Psoas muscle (tissue), 8 donors: ENCODE measurements at regions of chr1 and their contacts with region 1.

Region 1: GRCh38 chr1:52552505-52553361 is at the start of gene TUT4:
- DNase-seq: peak; percentile 79 to 88
- ATAC-seq: peak; percentile 83 to 85 (median 84)
- H3K4me3 ChIP-seq: peak within 1 kb of the TSS; percentile 91
- H3K27ac ChIP-seq: peak within 1 kb of the TSS; percentile 92
- H3K4me1 ChIP-seq: peaks cover 42% of the 10 kb centered on the region
- H3K27me3 ChIP-seq: no peaks in the 10 kb centered on the region
- CTCF ChIP-seq: no peak
- total RNA-seq, gene TUT4: 44.3 to 70.5 (median 54.6) TPM

Region 2: DNA sequence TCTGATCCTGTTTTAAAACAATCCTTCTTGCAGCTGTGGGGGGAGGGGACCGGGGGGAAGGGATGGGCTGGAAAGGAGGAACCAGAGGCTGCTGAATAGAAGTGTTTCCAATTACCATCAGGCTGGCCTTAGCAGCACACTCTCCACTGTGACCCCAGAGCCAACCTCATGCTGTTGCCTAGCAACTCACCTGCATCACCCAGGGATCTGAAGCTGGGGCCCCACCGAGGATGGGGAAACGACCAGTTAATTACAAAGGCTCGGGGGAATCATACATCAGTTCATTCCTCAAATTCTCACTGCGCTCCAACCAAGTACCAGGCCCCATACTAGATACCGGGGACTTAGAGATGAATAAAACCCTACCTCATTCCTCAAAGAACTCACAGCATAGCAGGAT is 37.5 kb after region 1 on chr1:
- intact Hi-C with region 1: loop called in 1 of 2 experiments (anchors 5 kb)
- DNase-seq: no peak
- ATAC-seq: no peak
- H3K4me3 ChIP-seq: no peak overlapping the region
- H3K27ac ChIP-seq: no peak overlapping the region
- H3K4me1 ChIP-seq: peaks cover 20% of the 10 kb centered on the region
- H3K27me3 ChIP-seq: no peaks in the 10 kb centered on the region
- CTCF ChIP-seq: no peak

Region 3: GRCh38 chr1:52601991-52602855 is 49.5 kb after region 1 on chr1 and contains the start of gene GPX7:
- intact Hi-C with region 1: loop called (anchors 2 to 5 kb)
- DNase-seq: peak; percentile 47 to 76
- ATAC-seq: peak; percentile 11 to 51 (median 22)
- H3K4me3 ChIP-seq: peak within 1 kb of the TSS; percentile 68
- H3K27ac ChIP-seq: peak within 1 kb of the TSS; percentile 94
- H3K4me1 ChIP-seq: peaks cover 47% of the 10 kb centered on the region
- H3K27me3 ChIP-seq: no peaks in the 10 kb centered on the region
- CTCF ChIP-seq: no peak
- total RNA-seq, gene GPX7: 5.6 to 12.2 (median 10.2) TPM

Region 4: GRCh38 chr1:52674497-52675384 is 122.0 kb after region 1 on chr1:
- intact Hi-C with region 1: loop called (anchors 5 to 10 kb)
- DNase-seq: no peak
- ATAC-seq: no peak
- H3K4me3 ChIP-seq: no peak overlapping the region
- H3K27ac ChIP-seq: peak overlapping the region; percentile 84
- H3K4me1 ChIP-seq: peaks cover 42% of the 10 kb centered on the region
- H3K27me3 ChIP-seq: no peaks in the 10 kb centered on the region
- CTCF ChIP-seq: no peak